ENCODE measurements at regions of chr1 and their contacts with region 1.

Region 1: GRCh38 chr1:45654540-45655280 is 30.9 kb upstream of the CCDC17 start:
- DNase-seq: peak; percentile 34
- H3K4me3 Mint-ChIP-seq: peak overlapping the region; percentile 20
- H3K27ac Mint-ChIP-seq: peak overlapping the region; percentile 61
- H3K4me1 Mint-ChIP-seq: peaks cover 22% of the 10 kb centered on the region
- H3K27me3 Mint-ChIP-seq: no peaks in the 10 kb centered on the region

Region 2: DNA sequence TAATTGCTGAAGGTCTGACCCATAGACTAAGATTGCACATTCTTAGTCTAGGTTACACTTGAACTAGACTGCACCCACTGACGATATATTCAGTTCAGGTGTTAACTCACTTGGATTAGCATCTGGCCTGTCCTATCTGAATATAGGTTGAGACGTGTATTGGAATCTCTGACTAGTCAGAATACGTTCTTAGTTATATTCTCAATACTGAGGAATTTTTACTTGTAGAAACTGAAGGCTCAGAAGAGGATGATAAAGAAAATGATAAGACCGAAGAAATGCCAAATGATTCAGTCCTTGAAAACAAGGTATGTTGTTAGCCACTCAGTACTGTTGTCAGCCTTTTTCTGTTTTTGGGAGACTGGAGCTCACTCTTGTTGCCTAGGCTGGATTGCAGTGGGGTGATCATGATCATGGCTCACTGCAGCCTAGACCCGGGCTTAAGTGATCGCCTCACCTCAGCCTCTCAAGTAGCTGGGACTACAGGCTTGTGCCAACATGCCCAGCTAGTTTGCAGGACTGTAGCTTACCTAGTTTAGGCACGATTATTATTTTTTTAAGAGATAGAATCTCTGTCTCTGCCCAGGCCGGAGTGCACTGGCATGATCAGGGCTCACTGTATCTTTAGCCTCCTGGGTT is 41.6 kb before region 1 on chr1:
- CTCF ChIA-PET with region 1: no interaction called
- POLR2A ChIA-PET with region 1: no interaction called
- intact Hi-C with region 1: loop called (anchors 5 kb)
- DNase-seq: no peak
- H3K4me3 Mint-ChIP-seq: no peak overlapping the region
- H3K27ac Mint-ChIP-seq: no peak overlapping the region
- H3K4me1 Mint-ChIP-seq: peaks cover 6% of the 10 kb centered on the region
- H3K27me3 Mint-ChIP-seq: no peaks in the 10 kb centered on the region

Region 3: DNA sequence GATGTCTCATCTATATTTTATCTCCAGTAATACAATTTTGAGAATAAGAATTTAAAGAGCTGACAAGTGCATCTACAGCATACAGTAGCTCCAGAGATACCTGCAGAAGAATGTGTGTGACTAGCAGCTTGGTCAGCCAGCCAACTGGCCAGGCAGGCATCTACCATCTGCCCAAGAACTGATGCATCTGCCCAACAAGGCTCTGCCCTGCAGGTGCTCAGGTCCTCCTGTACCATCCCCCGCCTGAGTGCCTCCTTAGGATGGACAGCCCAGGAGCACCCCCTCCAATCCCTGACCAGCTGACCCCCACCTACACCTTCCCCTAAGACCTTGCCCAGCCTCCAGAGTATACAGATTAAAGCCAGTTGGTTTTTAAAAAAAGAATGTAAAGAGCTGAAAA is 63.6 kb after region 1 on chr1:
- CTCF ChIA-PET with region 1: no interaction called
- POLR2A ChIA-PET with region 1: no interaction called
- intact Hi-C with region 1: no loop called
- DNase-seq: no peak
- H3K4me3 Mint-ChIP-seq: no peak overlapping the region
- H3K27ac Mint-ChIP-seq: no peak overlapping the region
- H3K4me1 Mint-ChIP-seq: no peaks in the 10 kb centered on the region
- H3K27me3 Mint-ChIP-seq: no peaks in the 10 kb centered on the region

Region 4: DNA sequence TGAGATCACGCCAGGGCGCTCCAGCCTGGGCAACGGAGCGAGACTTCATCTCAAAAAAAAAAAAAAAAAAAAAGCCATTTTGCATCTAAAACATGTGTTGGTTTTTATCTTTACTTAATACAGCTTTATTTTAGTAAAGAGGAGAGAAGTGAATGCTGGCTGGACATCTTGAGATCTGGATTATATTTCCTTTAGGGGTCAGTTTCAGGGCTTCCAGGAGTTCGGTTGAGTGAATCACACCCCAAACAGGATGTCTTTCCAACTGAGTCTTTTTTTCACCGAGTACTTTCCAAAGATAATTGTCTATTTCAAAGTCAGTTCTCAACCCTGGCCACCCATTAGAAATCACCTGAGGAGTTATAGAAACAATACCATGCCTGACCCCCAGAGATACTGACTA is 112.3 kb after region 1 on chr1:
- CTCF ChIA-PET with region 1: no interaction called
- POLR2A ChIA-PET with region 1: no interaction called
- intact Hi-C with region 1: no loop called
- DNase-seq: no peak
- H3K4me3 Mint-ChIP-seq: no peak overlapping the region
- H3K27ac Mint-ChIP-seq: no peak overlapping the region
- H3K4me1 Mint-ChIP-seq: no peaks in the 10 kb centered on the region
- H3K27me3 Mint-ChIP-seq: no peaks in the 10 kb centered on the region

Measured in activated CD4-positive, alpha-beta memory T cell treated with anti-CD3 and anti-CD28 coated beads for 36 hours (primary cell).